GM12878 (cell line): ENCODE measurements at regions of chr2 and their contacts with region 1.

Region 1: DNA sequence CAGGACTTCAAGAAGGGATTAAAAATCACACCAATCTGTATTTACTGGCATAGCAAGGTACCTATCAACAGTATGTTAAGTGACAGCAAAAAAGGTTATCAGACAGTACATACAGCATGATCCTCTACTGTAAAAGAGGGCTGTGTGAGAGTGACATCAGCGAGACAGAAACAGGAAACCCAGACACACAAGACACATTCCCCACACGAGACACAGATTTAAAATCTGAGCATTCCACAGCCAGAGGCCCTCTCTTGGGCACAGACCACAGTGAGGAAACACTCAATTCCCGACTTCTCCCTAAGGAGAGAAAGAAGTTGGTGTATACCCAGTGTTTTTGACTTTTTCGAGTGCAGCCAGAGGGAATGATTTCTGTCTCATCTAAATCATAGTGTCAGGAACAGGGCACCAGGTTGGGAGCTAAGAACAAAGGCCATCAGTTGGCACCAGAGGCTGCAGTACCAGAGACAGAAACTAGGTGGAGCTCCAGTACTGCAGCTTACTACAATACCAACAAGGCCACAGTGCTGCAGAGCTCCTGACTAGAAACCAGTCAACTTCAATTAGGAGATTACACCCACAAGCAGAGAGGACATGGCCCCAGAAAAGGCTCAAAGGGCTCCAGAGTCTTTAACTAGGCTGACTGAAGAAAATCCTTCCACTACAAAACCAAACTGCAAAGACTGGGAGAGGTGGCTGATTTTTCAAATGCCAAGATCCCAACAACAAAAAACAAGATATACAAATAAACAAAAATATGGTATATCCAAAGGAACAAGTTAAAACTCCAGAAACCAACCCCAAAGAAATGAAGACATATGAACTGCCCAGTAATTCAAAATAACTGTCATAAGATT is 41.0 kb downstream of the UNC50 start:
- DNase-seq: peak; percentile 54
- ATAC-seq: peak; percentile 97
- H3K4me3 ChIP-seq: no peak overlapping the region
- H3K27ac ChIP-seq: no peak overlapping the region
- H3K4me1 ChIP-seq: peaks cover 6% of the 10 kb centered on the region
- H3K27me3 ChIP-seq: no peaks in the 10 kb centered on the region
- CTCF ChIP-seq: peak; percentile 97 to 99 (median 99)
- EP300 ChIP-seq: no peak
- POLR2A ChIP-seq: no peak
- RAD21 ChIP-seq: peak; percentile 99

Region 2: DNA sequence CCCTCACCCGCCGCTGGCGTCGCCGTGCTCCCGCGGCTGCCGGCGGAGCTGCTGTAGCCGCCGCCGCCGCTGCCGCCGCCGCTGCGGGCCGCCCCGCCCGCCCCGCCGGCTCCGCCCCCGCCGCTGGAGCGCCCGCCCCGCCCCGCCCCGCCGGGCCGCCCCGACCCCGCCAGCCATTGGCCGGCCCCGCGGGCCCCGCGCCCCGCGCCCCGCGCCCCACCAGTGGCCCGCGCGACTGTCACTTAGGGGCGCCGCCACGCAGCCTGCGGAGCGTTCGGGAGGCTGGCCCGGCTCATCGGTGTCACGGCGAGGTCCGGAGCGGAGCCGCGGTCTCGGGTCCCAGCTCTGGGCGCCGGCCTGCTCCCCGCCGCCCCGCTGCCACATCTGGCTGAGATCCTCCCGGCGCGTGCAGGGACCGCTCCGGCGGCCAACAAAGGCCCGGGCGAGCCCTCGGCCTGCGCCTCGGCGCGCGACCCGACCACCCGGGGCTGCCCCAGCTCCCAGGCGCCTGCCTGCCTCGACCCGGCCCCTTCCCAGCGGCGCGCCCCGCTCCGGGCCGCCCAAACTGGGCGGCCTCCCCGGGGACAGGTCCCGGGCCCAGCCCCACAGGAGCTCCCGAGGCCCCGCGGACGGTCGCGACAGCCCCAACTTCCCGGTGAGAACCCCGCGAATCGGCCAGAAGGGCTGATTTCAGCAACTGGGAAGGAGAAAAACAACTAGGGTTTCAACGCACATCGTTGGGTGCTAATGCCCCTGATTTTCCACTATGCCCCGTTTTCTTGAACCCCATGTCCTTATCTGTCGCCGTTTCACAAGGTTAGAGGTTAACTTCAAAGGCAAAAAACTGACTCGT is 81.9 kb after region 1 on chr2 and contains the start of gene MGAT4A:
- CTCF ChIA-PET with region 1: interaction called, 5 read pairs
- POLR2A ChIA-PET with region 1: no interaction called
- RAD21 ChIA-PET with region 1: interaction called, 10 read pairs
- SMC1A ChIA-PET with region 1: interaction called, 10 read pairs
- in situ Hi-C with region 1: no loop called
- intact Hi-C with region 1: loop called (anchors 5 kb)
- DNase-seq: no peak
- ATAC-seq: peak; percentile 87
- H3K4me3 ChIP-seq: peak within 1 kb of the TSS; percentile 80
- H3K27ac ChIP-seq: no peak within 1 kb of the TSS
- H3K4me1 ChIP-seq: no peaks in the 10 kb centered on the region; the same call in 1 of the 2 replicates
- H3K27me3 ChIP-seq: no peaks in the 10 kb centered on the region; a peak in 1 of 4 replicates
- CTCF ChIP-seq: no peak
- EP300 ChIP-seq: no peak
- POLR2A ChIP-seq: peak; percentile 69
- RAD21 ChIP-seq: no peak
- polyA plus RNA-seq, gene MGAT4A: 10.2 to 11.9 TPM

Region 3: GRCh38 chr2:98771721-98772524 is 122.6 kb after region 1 on chr2:
- CTCF ChIA-PET with region 1: interaction called, 11 read pairs
- POLR2A ChIA-PET with region 1: no interaction called
- RAD21 ChIA-PET with region 1: interaction called, 3 read pairs
- SMC1A ChIA-PET with region 1: no interaction called
- in situ Hi-C with region 1: no loop called
- intact Hi-C with region 1: no loop called
- DNase-seq: no peak
- ATAC-seq: peak; percentile 66
- H3K4me3 ChIP-seq: peak overlapping the region; percentile 26; the same call in 1 of the 2 replicates
- H3K27ac ChIP-seq: peak overlapping the region; percentile 63
- H3K4me1 ChIP-seq: peaks cover 16% of the 10 kb centered on the region
- H3K27me3 ChIP-seq: no peaks in the 10 kb centered on the region
- CTCF ChIP-seq: no peak
- EP300 ChIP-seq: no peak
- POLR2A ChIP-seq: peak; percentile 41; the same call in 1 of the 2 replicates
- RAD21 ChIP-seq: no peak

Region 4: GRCh38 chr2:98835831-98836385 is 186.5 kb after region 1 on chr2:
- CTCF ChIA-PET with region 1: interaction called, 124 read pairs
- POLR2A ChIA-PET with region 1: interaction called, 4 read pairs
- RAD21 ChIA-PET with region 1: interaction called, 60 read pairs
- SMC1A ChIA-PET with region 1: interaction called, 51 read pairs
- in situ Hi-C with region 1: loop called (anchors 5 kb)
- intact Hi-C with region 1: loop called (anchors 1 kb)
- DNase-seq: peak; percentile 4
- ATAC-seq: peak; percentile 85
- H3K4me3 ChIP-seq: no peak overlapping the region
- H3K27ac ChIP-seq: no peak overlapping the region
- H3K4me1 ChIP-seq: no peaks in the 10 kb centered on the region
- H3K27me3 ChIP-seq: no peaks in the 10 kb centered on the region
- CTCF ChIP-seq: no peak
- EP300 ChIP-seq: peak in 1 of 2 experiments; percentile 68; a peak in 1 of 4 replicates
- POLR2A ChIP-seq: no peak
- RAD21 ChIP-seq: no peak

Region 5: DNA sequence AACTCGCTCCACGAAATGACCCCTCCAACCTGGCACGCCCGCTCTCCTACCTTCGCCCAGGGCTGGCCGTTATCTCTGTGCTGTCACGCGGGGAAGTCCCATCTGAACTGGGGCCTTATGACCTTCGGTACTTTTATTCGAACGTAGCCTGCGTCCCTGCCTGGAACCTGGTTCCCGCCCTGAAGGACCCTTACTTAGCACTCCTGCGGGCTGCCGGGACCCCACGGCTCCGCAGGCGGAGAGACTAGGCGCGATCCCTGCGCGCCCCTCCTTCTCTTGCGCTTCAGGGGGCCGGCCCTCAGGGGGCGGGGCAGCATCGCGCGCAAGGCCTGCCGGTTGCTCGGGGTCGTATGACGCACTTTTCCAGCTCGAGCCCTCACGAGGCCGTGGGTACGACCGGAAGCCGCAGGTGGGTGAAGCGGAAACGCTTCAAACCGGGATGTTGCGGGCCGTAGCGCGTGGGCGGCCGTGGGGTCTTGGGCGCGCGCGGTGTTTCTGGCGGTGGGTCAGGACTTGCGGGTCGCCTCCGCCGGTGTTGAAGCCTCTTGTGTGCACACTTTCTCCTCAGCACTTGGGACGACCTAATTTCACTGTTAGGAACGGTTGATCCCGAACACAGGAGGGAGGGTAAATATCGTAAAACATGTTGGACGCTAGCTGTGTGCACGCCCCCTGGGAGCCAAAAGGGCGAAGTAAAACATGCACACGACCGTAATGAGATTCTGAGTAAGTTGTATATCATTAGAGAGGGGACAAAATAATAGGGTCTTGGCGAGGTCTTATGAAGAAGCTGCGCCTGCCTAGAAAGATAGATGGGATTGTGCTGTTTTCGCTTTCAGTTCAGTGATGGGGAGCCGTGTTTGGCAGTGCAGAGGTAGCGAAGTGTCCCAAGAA is 505.5 kb after region 1 on chr2 and contains the starts of genes LIPT1 and TSGA10:
- CTCF ChIA-PET with region 1: no interaction called
- POLR2A ChIA-PET with region 1: no interaction called
- RAD21 ChIA-PET with region 1: interaction called, 3 read pairs
- SMC1A ChIA-PET with region 1: no interaction called
- in situ Hi-C with region 1: no loop called
- intact Hi-C with region 1: loop called (anchors 10 kb)
- DNase-seq: peak; percentile 69
- ATAC-seq: peak; percentile 94
- H3K4me3 ChIP-seq: peak within 1 kb of the TSS; percentile 78
- H3K27ac ChIP-seq: peak within 1 kb of the TSS; percentile 76
- H3K4me1 ChIP-seq: no peaks in the 10 kb centered on the region
- H3K27me3 ChIP-seq: no peaks in the 10 kb centered on the region
- CTCF ChIP-seq: no peak
- EP300 ChIP-seq: peak; percentile 32 to 55; a peak in 2 of 4 replicates
- POLR2A ChIP-seq: peak; percentile 97
- RAD21 ChIP-seq: no peak
- polyA plus RNA-seq, gene LIPT1: 14.4 to 15.3 TPM
- polyA plus RNA-seq, gene TSGA10: 10.2 to 11.6 TPM